GM12878 (cell line): ENCODE measurements at regions of chr6 and their contacts with region 1.

Region 1: GRCh38 chr6:305371-306206 is 13.3 kb downstream of the DUSP22 start:
- DNase-seq: peak; percentile 97
- ATAC-seq: peak; percentile 84
- H3K4me3 ChIP-seq: peak overlapping the region; percentile 26; the same call in 1 of the 2 replicates
- H3K27ac ChIP-seq: peak overlapping the region; percentile 100
- H3K4me1 ChIP-seq: peaks cover 77% of the 10 kb centered on the region
- H3K27me3 ChIP-seq: no peaks in the 10 kb centered on the region
- CTCF ChIP-seq: no peak
- EP300 ChIP-seq: peak; percentile 100
- POLR2A ChIP-seq: no peak
- RAD21 ChIP-seq: peak; percentile 30; the same call in 1 of the 2 replicates

Region 2: DNA sequence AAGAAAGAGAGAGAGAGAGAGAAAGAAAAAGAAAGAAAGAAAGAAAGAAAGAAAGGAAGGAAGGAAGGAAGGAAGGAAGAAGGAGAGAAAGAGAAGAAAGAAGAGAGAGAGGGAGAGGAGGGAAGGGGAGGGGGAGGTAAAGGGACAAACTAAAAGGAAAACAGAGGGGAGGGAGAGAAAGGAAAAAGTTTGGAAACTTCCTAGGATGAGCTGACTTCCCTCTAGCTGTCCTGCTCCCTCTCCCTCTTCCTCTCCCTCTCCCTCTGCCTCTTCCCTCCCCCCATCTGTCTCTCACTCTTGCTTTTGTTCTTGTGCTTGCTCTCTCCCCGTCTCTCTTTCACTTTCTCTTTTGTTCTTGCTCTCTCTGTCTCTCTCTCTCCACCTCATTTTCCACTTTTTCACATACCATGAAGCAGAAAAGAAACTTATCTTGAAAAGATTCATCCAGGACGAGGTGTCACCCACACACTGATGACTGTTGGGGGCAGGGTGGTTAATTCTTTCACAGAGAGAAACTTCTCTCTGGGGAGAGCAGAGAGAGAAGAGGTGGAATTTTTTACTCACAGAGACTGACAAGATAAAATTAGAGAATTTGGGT is 69.7 kb before region 1 on chr6:
- CTCF ChIA-PET with region 1: interaction called, 3 read pairs
- POLR2A ChIA-PET with region 1: interaction called, 7 read pairs
- RAD21 ChIA-PET with region 1: interaction called, 60 read pairs
- SMC1A ChIA-PET with region 1: interaction called, 15 read pairs
- in situ Hi-C with region 1: no loop called
- intact Hi-C with region 1: no loop called
- DNase-seq: peak; percentile 85
- ATAC-seq: peak; percentile 78
- H3K4me3 ChIP-seq: peak overlapping the region; percentile 16; the same call in 1 of the 2 replicates
- H3K27ac ChIP-seq: peak overlapping the region; percentile 87
- H3K4me1 ChIP-seq: peaks cover 51% of the 10 kb centered on the region
- H3K27me3 ChIP-seq: no peaks in the 10 kb centered on the region
- CTCF ChIP-seq: no peak
- EP300 ChIP-seq: peak in 1 of 2 experiments; percentile 73; a peak in 2 of 4 replicates
- POLR2A ChIP-seq: no peak
- RAD21 ChIP-seq: peak; percentile 37; the same call in 1 of the 2 replicates

Region 3: DNA sequence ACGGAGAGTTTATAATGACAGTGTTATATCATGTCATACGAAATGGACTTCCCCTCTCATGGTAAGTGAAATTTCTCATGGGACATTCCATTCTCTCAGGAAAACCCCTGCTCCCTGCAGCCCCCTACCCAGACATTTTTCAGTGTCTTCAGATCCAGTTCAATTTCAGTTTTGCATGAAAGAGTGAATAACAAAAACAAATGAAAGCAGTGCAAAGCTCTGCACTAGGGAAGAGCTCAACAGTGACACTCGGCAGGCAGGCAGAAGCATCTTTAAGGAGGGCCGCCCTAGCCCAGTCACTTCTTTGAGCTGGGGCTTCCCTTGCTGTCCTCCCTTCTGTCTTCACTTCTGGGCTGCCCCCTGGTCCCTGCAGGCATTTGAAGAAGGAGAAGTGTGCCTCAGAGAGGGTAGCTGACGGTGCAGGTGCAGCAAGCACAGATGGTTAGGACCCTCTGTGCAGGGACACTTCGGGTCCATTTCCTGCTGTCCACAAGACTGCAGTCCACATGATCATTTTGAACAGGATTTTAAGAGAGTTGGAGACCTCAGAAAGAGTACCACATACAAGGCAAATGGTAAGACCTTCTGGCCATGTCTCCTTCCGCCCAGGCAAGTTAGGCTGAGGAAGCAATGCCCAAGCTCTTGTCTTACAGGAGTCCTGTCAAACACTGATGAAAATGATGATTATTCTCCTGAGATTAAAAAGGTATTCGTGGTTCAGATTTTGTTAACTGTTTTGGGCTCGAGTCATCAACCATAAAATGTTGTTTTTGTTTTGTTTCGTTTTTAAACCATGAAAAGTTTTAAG is 18.7 kb before region 1 on chr6:
- CTCF ChIA-PET with region 1: interaction called, 11 read pairs
- POLR2A ChIA-PET with region 1: interaction called, 39 read pairs
- RAD21 ChIA-PET with region 1: interaction called, 34 read pairs
- SMC1A ChIA-PET with region 1: interaction called, 58 read pairs
- in situ Hi-C with region 1: no loop called
- intact Hi-C with region 1: no loop called
- DNase-seq: no peak
- ATAC-seq: peak; percentile 48
- H3K4me3 ChIP-seq: peak overlapping the region; percentile 2; the same call in 1 of the 2 replicates
- H3K27ac ChIP-seq: peak overlapping the region; percentile 53
- H3K4me1 ChIP-seq: peaks cover 54% of the 10 kb centered on the region
- H3K27me3 ChIP-seq: no peaks in the 10 kb centered on the region
- CTCF ChIP-seq: no peak
- EP300 ChIP-seq: 0 out of 4 replicates have a peak, but pooled peaks have one; percentile 42 to 61
- POLR2A ChIP-seq: no peak
- RAD21 ChIP-seq: 0 out of 2 replicates have a peak, but pooled peaks have one; percentile 7

Region 4: GRCh38 chr6:336159-337019 is 30.8 kb after region 1 on chr6:
- CTCF ChIA-PET with region 1: interaction called, 83 read pairs
- POLR2A ChIA-PET with region 1: interaction called, 150 read pairs
- RAD21 ChIA-PET with region 1: interaction called, 170 read pairs
- SMC1A ChIA-PET with region 1: interaction called, 168 read pairs
- in situ Hi-C with region 1: no loop called
- intact Hi-C with region 1: no loop called
- DNase-seq: peak; percentile 88
- ATAC-seq: peak; percentile 12
- H3K4me3 ChIP-seq: peak overlapping the region; percentile 11; the same call in 1 of the 2 replicates
- H3K27ac ChIP-seq: peak overlapping the region; percentile 86
- H3K4me1 ChIP-seq: peaks cover 86% of the 10 kb centered on the region
- H3K27me3 ChIP-seq: no peaks in the 10 kb centered on the region
- CTCF ChIP-seq: no peak
- EP300 ChIP-seq: 0 out of 4 replicates have a peak, but pooled peaks of 1 of the 2 experiments have one; percentile 30
- POLR2A ChIP-seq: no peak
- RAD21 ChIP-seq: 0 out of 2 replicates have a peak, but pooled peaks have one; percentile 21

Region 5: DNA sequence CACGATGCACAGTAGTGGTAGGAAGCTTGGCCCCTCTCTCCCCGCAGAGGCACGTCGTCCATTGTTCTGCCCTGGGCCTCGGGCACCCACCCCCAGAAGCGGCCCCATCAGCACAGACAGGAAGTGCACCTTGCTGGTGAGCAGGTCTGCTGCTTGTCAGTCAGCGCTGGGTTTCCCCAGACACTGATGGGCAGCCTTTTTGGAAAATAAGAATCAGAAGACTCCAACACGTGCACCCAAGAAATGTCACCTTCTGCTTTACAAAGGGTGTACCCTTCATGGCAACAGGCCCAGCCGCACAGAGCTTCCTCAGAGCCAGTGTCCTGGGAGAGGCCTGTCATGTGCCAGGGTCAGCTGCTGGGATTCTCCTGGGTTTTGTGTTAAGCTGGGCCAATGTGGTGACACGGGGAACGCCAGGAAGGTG is 51.3 kb after region 1 on chr6:
- CTCF ChIA-PET with region 1: interaction called, 5 read pairs
- POLR2A ChIA-PET with region 1: no interaction called
- RAD21 ChIA-PET with region 1: interaction called, 8 read pairs
- SMC1A ChIA-PET with region 1: interaction called, 13 read pairs
- in situ Hi-C with region 1: no loop called
- intact Hi-C with region 1: no loop called
- DNase-seq: no peak
- ATAC-seq: peak; percentile 80
- H3K4me3 ChIP-seq: no peak overlapping the region
- H3K27ac ChIP-seq: peak overlapping the region; percentile 56
- H3K4me1 ChIP-seq: peaks cover 45% of the 10 kb centered on the region
- H3K27me3 ChIP-seq: no peaks in the 10 kb centered on the region
- CTCF ChIP-seq: no peak
- EP300 ChIP-seq: no peak
- POLR2A ChIP-seq: no peak
- RAD21 ChIP-seq: no peak

Region 6: DNA sequence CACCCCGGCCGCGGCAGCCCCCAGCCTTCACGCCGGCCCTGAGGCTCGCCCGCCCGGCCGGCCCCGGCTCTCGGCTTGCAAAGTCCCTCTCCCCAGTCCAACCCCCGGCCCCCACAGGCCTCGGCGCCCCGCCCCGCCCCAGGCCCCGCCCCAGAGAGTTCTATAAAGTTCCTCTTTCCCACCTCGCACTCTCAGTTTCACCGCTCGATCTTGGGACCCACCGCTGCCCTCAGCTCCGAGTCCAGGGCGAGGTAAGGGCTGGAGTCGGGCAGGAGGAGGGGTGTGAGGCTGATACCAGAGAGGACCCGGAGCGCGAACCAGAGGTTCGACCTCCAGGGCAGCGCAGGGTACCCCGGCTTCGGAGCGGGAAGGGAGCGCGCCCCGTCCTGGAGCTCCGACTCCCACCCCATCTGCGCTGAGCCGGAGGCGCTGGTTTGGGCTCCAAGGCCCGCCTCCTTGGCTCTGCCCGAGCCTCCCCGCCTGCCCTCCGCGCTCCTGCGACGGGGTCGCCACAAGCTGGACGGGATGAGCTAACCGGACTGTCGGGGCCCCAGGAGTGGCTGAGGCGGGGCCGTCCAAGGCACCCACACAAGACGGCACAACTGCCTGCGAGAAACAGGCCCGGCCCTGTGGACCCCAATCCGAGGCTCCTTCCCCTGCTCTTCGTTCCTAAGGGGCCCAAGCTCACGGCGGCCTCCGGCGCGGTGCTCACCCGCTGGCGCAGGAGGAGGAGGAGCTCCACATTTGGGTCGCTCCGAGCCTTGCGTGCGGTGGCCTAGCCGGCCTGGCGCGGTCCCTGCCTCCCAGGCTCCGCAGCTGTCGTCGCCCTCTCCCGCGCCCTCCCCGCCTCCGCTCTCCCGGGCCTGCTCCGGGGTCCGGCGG is 86.2 kb after region 1 on chr6 and contains the start of gene IRF4:
- CTCF ChIA-PET with region 1: interaction called, 4 read pairs
- POLR2A ChIA-PET with region 1: interaction called, 20 read pairs
- RAD21 ChIA-PET with region 1: interaction called, 23 read pairs
- SMC1A ChIA-PET with region 1: interaction called, 10 read pairs
- in situ Hi-C with region 1: no loop called
- intact Hi-C with region 1: no loop called
- DNase-seq: no peak
- ATAC-seq: peak; percentile 63
- H3K4me3 ChIP-seq: peak within 1 kb of the TSS; percentile 95
- H3K27ac ChIP-seq: peak within 1 kb of the TSS; percentile 97
- H3K4me1 ChIP-seq: peaks cover 33% of the 10 kb centered on the region
- H3K27me3 ChIP-seq: no peaks in the 10 kb centered on the region
- CTCF ChIP-seq: no peak
- EP300 ChIP-seq: no peak
- POLR2A ChIP-seq: peak; percentile 77
- RAD21 ChIP-seq: peak; percentile 25; the same call in 1 of the 2 replicates
- polyA plus RNA-seq, gene IRF4: 50.0 to 98.9 TPM

Region 7: GRCh38 chr6:934686-935085 is 629.1 kb after region 1 on chr6:
- CTCF ChIA-PET with region 1: no interaction called
- POLR2A ChIA-PET with region 1: no interaction called
- RAD21 ChIA-PET with region 1: no interaction called
- SMC1A ChIA-PET with region 1: no interaction called
- in situ Hi-C with region 1: no loop called
- intact Hi-C with region 1: no loop called
- DNase-seq: no peak
- ATAC-seq: no peak
- H3K4me3 ChIP-seq: no peak overlapping the region
- H3K27ac ChIP-seq: no peak overlapping the region
- H3K4me1 ChIP-seq: no peaks in the 10 kb centered on the region
- H3K27me3 ChIP-seq: peaks cover 5 to 10% of the 10 kb centered on the region in 2 experiments; a peak in 3 of 4 replicates
- CTCF ChIP-seq: no peak
- EP300 ChIP-seq: no peak
- POLR2A ChIP-seq: no peak
- RAD21 ChIP-seq: no peak